SK-N-SH (cell line): ENCODE measurements at regions of chr15 and their contacts with region 1.

Region 1: GRCh38 chr15:59528965-59529402 is 82.6 kb upstream of the GCNT3 start:
- DNase-seq: peak; percentile 80
- H3K4me3 ChIP-seq: no peak overlapping the region
- H3K27ac ChIP-seq: no peak overlapping the region
- H3K4me1 ChIP-seq: no peaks in the 10 kb centered on the region
- H3K27me3 ChIP-seq: no peaks in the 10 kb centered on the region
- CTCF ChIP-seq: peak; percentile 86
- EP300 ChIP-seq: no peak
- RAD21 ChIP-seq: peak; percentile 96

Region 2: GRCh38 chr15:59160880-59161593 is 367.9 kb before region 1 on chr15:
- CTCF ChIA-PET with region 1: interaction called, 14 read pairs
- POLR2A ChIA-PET with region 1: no interaction called
- DNase-seq: peak; percentile 72
- H3K4me3 ChIP-seq: no peak overlapping the region
- H3K27ac ChIP-seq: no peak overlapping the region
- H3K4me1 ChIP-seq: no peaks in the 10 kb centered on the region; a peak in 1 of 4 replicates
- H3K27me3 ChIP-seq: no peaks in the 10 kb centered on the region
- CTCF ChIP-seq: peak; percentile 65
- EP300 ChIP-seq: no peak
- RAD21 ChIP-seq: peak; percentile 82

Region 3: GRCh38 chr15:59484399-59484798 is 44.6 kb before region 1 on chr15:
- CTCF ChIA-PET with region 1: no interaction called
- POLR2A ChIA-PET with region 1: no interaction called
- DNase-seq: no peak
- H3K4me3 ChIP-seq: no peak overlapping the region
- H3K27ac ChIP-seq: no peak overlapping the region
- H3K4me1 ChIP-seq: no peaks in the 10 kb centered on the region
- H3K27me3 ChIP-seq: no peaks in the 10 kb centered on the region; the same call in 1 of the 2 replicates
- CTCF ChIP-seq: no peak
- EP300 ChIP-seq: no peak
- RAD21 ChIP-seq: no peak

Region 4: DNA sequence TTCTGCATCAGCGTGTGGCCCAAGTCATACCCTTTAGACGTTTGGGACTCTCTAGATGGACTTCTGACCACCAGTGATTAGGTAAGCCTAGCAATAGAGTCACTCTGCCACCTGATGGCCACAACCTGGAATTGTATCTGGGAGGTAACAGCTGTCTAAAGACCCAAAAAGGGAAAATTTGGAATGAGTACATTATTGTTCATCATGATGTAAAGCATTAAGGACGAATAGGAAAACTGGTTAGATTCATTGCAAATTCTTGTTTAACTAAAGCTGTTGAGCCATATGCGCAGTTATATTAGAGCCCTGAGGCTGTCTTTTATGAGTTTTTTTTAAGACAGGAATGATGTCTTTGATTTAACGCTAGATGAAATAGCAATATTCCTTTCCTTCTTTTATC is 27.4 kb before region 1 on chr15:
- CTCF ChIA-PET with region 1: interaction called, 35 read pairs
- POLR2A ChIA-PET with region 1: no interaction called
- DNase-seq: peak; percentile 60
- H3K4me3 ChIP-seq: peak overlapping the region in 1 of 2 experiments; percentile 34; a peak in 1 of 4 replicates
- H3K27ac ChIP-seq: no peak overlapping the region
- H3K4me1 ChIP-seq: no peaks in the 10 kb centered on the region
- H3K27me3 ChIP-seq: no peaks in the 10 kb centered on the region
- CTCF ChIP-seq: peak; percentile 63
- EP300 ChIP-seq: no peak
- RAD21 ChIP-seq: peak; percentile 82

Region 5: GRCh38 chr15:59558846-59559245 is 29.9 kb after region 1 on chr15:
- CTCF ChIA-PET with region 1: interaction called, 10 read pairs
- POLR2A ChIA-PET with region 1: no interaction called
- DNase-seq: no peak
- H3K4me3 ChIP-seq: no peak overlapping the region
- H3K27ac ChIP-seq: no peak overlapping the region
- H3K4me1 ChIP-seq: no peaks in the 10 kb centered on the region
- H3K27me3 ChIP-seq: no peaks in the 10 kb centered on the region
- CTCF ChIP-seq: no peak
- EP300 ChIP-seq: no peak
- RAD21 ChIP-seq: no peak

Region 6: GRCh38 chr15:59656897-59657634 is 128.1 kb after region 1 on chr15 and contains the start of gene GTF2A2:
- CTCF ChIA-PET with region 1: interaction called, 13 read pairs
- POLR2A ChIA-PET with region 1: no interaction called
- DNase-seq: peak; percentile 96
- H3K4me3 ChIP-seq: peak within 1 kb of the TSS; percentile 92 to 94
- H3K27ac ChIP-seq: peak within 1 kb of the TSS; percentile 72 to 89
- H3K4me1 ChIP-seq: peaks cover 8 to 9% of the 10 kb centered on the region in 2 experiments; a peak in 3 of 4 replicates
- H3K27me3 ChIP-seq: no peaks in the 10 kb centered on the region
- CTCF ChIP-seq: no peak
- EP300 ChIP-seq: peak in 1 of 2 experiments; percentile 42; a peak in 2 of 4 replicates
- RAD21 ChIP-seq: no peak
- polyA plus RNA-seq, gene GTF2A2: 47.5 and 77.4 TPM in 2 replicates